RWPE1 (cell line): ENCODE measurements at regions of chr1 and their contacts with region 1.

Region 1: DNA sequence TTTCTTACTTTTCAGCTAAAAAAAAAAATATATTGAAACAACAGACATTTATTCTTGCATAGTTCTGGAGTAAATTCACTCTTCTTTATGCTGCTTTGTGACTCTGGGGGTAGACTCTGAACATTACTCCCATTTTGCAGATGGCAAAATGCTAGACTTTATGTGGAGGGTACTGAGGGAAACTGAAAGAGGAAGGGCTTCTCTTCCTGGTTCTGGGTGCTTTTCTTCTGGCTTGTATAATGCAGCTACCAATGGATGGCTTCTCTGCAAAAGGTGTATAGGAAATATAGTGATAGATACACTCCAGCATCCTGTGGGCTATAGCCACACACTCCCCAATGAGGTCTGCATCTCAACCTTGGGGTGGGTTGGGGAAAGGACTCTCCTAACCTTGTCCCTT is 19.7 kb upstream of the ZBTB40 start:
- DNase-seq: no peak
- H3K27ac ChIP-seq: no peak overlapping the region
- CTCF ChIP-seq: no peak

Region 2: GRCh38 chr1:22451702-22452474 is 19.9 kb after region 1 on chr1 and contains the start of gene ZBTB40:
- CTCF ChIA-PET with region 1: no interaction called
- POLR2A ChIA-PET with region 1: no interaction called
- DNase-seq: peak; percentile 93
- H3K27ac ChIP-seq: peak within 1 kb of the TSS; percentile 87
- CTCF ChIP-seq: no peak

Region 3: DNA sequence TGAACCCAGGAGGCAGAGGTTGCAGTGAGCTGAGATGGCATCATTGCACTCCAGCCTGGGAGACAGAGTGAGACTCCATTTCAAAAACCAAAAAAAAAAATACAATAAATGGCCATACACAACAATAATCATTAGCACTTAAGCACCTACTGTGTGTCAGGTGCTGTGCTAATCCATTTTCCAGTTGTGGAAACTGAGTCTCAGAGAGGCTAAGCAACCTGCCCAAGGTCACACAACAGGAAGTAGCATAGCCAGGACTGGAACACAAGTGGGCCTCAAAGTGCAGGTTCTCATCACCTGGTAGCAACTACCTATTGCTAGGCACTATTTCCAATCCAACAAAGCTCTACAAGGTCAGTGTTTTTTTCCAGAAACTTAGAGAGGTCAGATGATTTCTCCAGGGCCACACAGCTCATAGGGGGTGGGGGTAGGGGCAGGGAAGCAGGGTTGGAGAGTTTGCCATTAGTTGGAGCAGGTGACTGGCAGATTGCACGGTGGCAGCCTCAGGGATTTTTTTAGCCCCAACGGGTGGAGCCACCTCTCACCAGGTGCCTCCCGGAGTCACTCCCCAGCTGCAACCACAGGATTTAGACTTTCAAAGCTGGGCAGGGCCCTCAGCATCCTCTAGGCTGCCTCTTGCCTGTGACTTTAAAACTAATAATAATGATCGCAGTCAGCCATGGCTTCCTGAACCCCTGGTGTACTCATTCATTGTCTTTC is 1179.8 kb after region 1 on chr1:
- CTCF ChIA-PET with region 1: interaction called, 12 read pairs
- POLR2A ChIA-PET with region 1: no interaction called
- DNase-seq: no peak
- H3K27ac ChIP-seq: no peak overlapping the region
- CTCF ChIP-seq: no peak